ENCODE measurements at regions of chr11 and their contacts with region 1.

Region 1: DNA sequence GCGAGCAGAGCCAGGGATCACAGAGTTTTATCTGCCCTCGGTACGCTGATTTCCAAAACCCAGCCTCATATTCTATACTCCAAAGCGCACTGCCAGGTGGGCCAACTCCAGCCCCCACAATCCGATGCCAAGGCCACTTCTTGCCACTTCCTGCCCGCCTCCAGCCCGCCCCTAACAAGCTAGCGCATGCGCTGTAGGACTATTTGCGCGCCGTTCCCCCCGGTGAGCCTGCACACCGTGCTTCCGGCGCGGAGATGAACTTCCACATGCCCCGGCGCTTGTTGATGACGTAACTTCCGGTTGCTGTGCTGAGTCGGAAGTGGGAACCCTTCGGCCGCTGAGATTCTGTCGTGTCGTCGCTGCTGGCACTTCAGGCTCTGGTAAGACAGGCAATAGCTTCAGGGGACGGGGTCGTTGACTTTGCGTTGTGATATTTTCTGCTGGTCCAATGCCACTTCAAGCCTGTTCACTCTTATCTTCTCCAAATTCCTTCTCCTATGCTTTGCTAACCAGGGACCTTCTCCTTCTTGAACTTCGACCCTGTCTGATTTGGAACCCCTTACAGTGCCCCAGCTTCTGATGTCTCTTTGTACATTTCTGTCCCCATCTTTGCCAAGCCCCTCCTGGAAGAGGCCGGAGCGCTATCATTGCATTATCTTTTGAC is at the start of gene UBE4A:
- DNase-seq: peak; percentile 96

Region 2: GRCh38 chr11:118304568-118305248 is 54.7 kb before region 1 on chr11 and contains the start of gene CD3E:
- in situ Hi-C with region 1: loop called (anchors 10 kb)
- DNase-seq: no peak